ENCODE measurements at regions of chr11 and their contacts with region 1.

Region 1: GRCh38 chr11:77580712-77581337 is 8.9 kb upstream of the AQP11 start:
- DNase-seq: peak; percentile 40 to 63
- H3K4me3 ChIP-seq: no peak overlapping the region
- H3K4me3 Mint-ChIP-seq: no peak overlapping the region
- H3K27ac Mint-ChIP-seq: no peak overlapping the region
- H3K4me1 ChIP-seq: no peaks in the 10 kb centered on the region
- H3K4me1 Mint-ChIP-seq: peaks cover 5% of the 10 kb centered on the region
- H3K27me3 ChIP-seq: no peaks in the 10 kb centered on the region
- H3K27me3 Mint-ChIP-seq: no peaks in the 10 kb centered on the region
- CTCF ChIP-seq: no peak

Region 2: DNA sequence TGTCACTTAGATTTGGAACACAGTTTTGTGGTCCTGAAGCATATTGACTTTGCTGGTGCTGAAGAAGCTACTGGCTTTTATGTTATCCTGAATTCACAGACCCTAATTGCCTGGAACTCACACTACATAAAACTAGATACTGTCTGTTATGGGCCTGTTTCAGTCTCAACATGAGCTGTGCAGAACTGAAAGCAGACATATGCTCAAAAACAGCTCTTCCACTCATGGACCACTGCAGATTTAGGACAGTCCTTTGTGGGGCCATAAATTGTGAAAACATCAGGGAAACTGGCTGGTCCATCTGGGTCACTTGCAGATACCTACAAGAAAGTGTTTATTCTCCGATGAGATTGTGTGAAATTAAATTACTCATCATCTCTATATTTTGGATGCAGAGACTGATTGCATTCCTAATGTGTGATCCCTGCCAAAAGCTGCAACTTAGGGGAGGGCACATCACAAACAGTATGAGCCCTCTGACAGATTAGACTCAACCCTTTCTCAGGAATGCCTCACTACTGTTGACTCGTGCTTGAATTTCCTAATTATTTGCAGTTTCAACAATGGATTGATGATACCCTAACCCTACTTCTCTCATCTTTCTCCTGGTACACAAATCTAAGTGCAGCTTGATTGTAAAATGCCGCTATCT is 67.0 kb after region 1 on chr11:
- CTCF ChIA-PET with region 1: no interaction called
- POLR2A ChIA-PET with region 1: no interaction called
- intact Hi-C with region 1: no loop called
- DNase-seq: no peak
- H3K4me3 ChIP-seq: no peak overlapping the region
- H3K4me3 Mint-ChIP-seq: no peak overlapping the region
- H3K27ac Mint-ChIP-seq: no peak overlapping the region
- H3K4me1 ChIP-seq: peaks cover 9% of the 10 kb centered on the region; the same call in 1 of the 2 replicates
- H3K4me1 Mint-ChIP-seq: peaks cover 5% of the 10 kb centered on the region
- H3K27me3 ChIP-seq: no peaks in the 10 kb centered on the region
- H3K27me3 Mint-ChIP-seq: no peaks in the 10 kb centered on the region
- CTCF ChIP-seq: no peak

Region 3: DNA sequence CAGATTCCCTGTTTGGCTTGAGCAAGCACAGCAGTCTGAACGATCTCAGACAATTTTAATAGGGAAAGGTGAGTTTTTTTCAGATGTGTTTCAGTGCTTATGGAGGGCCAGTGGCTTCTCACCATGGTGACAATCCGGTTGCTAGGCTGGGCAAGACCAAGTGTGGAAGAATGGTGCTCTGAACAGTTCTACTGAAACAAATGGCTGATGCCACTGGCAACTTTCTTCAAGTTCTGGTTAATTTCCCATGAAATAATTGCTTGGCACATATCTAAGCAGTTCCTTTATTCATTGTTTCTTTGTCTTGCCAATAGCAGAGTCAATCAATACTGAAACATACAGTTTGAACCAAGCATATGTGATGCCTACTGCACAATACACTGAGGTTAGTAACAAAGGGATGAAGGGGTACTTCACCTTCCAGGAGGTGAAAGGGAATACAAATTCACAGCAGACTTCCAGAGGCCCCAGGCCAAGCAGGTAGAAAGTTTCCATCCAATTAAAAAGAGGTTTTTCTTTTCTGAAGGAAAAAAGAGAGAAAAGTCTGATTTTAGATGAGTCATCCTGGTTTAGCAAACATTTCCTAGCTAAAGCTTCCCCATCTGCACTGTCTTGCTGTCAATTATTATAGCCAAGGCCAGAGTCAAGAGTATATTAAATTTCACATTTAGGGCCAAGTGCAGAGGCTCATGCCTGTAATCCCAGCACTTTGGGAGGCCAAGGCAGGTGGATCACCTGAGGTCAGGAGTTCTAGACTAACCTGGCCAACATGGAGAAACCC is 520.0 kb after region 1 on chr11:
- CTCF ChIA-PET with region 1: no interaction called
- POLR2A ChIA-PET with region 1: interaction called, 12 read pairs
- intact Hi-C with region 1: no loop called
- DNase-seq: no peak
- H3K4me3 ChIP-seq: no peak overlapping the region
- H3K4me3 Mint-ChIP-seq: no peak overlapping the region
- H3K27ac Mint-ChIP-seq: no peak overlapping the region
- H3K4me1 ChIP-seq: peaks cover 6% of the 10 kb centered on the region; the same call in 1 of the 2 replicates
- H3K4me1 Mint-ChIP-seq: peaks cover 19% of the 10 kb centered on the region
- H3K27me3 ChIP-seq: no peaks in the 10 kb centered on the region
- H3K27me3 Mint-ChIP-seq: no peaks in the 10 kb centered on the region
- CTCF ChIP-seq: no peak

Measured in Caco-2 (cell line).